ENCODE measurements at regions of chr6 and their contacts with region 1.

Region 1: GRCh38 chr6:83192871-83193746 is at the starts of genes PGM3 and RWDD2A:
- DNase-seq: peak; percentile 91 to 92
- ATAC-seq: peak; percentile 99 to 100 (median 100)
- H3K4me3 ChIP-seq: peak within 1 kb of the TSS; percentile 75 to 95 (median 88)
- H3K27ac ChIP-seq: peak within 1 kb of the TSS; percentile 67 to 92 (median 80)
- H3K4me1 ChIP-seq: peaks cover 0 to 38% (median 22%) of the 10 kb centered on the region in 9 donors
- H3K27me3 ChIP-seq: no peaks in the 10 kb centered on the region
- CTCF ChIP-seq: peak in 1 of 9 donors; percentile 5
- total RNA-seq, gene PGM3: 12.7 to 23.4 (median 17.0) TPM
- total RNA-seq, gene RWDD2A: 2.8 to 4.2 (median 3.4) TPM

Region 2: DNA sequence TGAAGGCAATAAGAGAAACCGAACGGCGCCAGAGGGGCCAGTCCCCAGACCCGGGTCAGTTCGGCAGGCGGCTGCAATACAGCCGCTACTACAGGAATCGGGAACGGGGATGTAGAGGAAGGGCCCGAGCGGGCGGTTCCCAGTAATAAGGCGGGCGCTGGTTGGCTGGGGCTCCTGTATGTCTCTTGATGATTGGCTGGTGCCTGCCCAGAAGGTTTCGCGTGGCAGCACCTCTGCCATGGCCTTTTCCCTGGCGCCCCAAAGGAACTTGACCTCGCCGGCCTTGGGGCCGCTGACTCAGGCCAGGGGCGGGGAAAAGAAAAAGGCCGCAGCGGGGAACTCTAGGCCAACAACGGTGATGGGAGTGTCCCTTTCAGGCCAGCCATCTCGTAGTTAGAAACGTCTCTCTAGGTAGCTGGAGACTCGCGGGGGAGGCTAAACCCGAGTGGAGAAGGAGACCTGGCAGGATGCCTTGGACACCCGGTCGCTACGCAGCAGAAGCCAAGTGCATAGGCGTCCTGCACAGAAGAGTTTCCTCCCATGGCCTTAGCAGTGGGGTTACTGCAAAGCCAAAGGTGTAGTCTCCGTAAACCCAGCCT is 945.4 kb before region 1 on chr6 and contains the start of gene IBTK:
- intact Hi-C with region 1: loop called in 4 of 10 experiments (anchors 5 to 10 kb)
- DNase-seq: peak; percentile 95
- ATAC-seq: peak; percentile 97 to 99 (median 99)
- H3K4me3 ChIP-seq: peak within 1 kb of the TSS; percentile 53 to 92 (median 83)
- H3K27ac ChIP-seq: peak within 1 kb of the TSS; percentile 7 to 97 (median 94)
- H3K4me1 ChIP-seq: peaks cover 3 to 49% (median 37%) of the 10 kb centered on the region in 9 donors
- H3K27me3 ChIP-seq: no peaks in the 10 kb centered on the region
- CTCF ChIP-seq: peak in 1 of 9 donors; percentile 1
- total RNA-seq, gene IBTK: 27.4 to 40.1 (median 36.4) TPM

Region 3: GRCh38 chr6:83086751-83087150 is 106.4 kb before region 1 on chr6:
- intact Hi-C with region 1: no loop called
- DNase-seq: no peak
- ATAC-seq: no peak
- H3K4me3 ChIP-seq: no peak overlapping the region
- H3K27ac ChIP-seq: peak overlapping the region in 1 of 10 donors; percentile 16
- H3K4me1 ChIP-seq: peaks cover 0 to 9% (median 0%) of the 10 kb centered on the region in 9 donors
- H3K27me3 ChIP-seq: no peaks in the 10 kb centered on the region
- CTCF ChIP-seq: no peak

Region 4: DNA sequence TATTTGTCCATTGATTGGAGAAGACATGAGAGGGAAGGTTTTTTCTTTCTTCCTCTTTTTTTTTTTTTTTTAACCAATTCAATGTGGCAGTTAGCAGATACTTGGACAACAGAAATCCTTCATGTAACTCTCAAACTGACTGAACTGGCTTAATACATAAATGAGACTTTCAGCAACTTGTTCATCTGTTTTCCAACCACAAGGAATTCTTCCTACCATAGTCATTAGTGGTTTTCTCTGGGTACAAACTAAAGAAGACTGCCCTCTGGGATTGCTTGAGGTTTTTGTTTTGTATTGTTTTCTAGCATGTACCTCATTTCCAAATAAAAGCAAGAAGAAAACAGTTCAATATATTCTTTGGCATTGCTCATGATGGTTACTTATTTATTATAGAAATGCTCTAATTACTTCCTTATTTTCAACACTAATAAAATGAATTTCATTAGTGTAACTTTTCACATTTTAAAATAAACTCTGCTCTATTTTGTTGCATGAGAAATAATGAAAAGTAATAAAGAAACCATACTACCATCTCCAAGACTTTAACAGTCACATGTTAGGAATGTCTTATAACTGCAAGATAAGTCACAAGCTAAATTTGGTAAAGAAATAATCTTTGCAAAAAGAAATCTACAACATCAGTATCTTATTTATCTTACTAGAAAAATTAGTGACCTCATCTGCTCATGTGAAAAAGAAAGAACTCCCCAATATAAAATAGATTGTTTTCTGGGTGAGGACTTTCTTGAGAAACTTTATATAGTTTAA is 185.7 kb after region 1 on chr6:
- intact Hi-C with region 1: no loop called
- DNase-seq: no peak
- ATAC-seq: no peak
- H3K4me3 ChIP-seq: no peak overlapping the region
- H3K27ac ChIP-seq: no peak overlapping the region
- H3K4me1 ChIP-seq: peaks cover 0 to 23% (median 11%) of the 10 kb centered on the region in 9 donors
- H3K27me3 ChIP-seq: no peaks in the 10 kb centered on the region
- CTCF ChIP-seq: no peak

Measured in heart right ventricle (tissue), 16 donors.